Naive thymus-derived CD4-positive, alpha-beta T cell (primary cell): ENCODE measurements at regions of chr6 and their contacts with region 1.

Region 1: GRCh38 chr6:39361657-39362486 is 39.4 kb upstream of the KCNK16 start:
- DNase-seq: peak in 7 of 9 donors; percentile 20 to 49 (median 34)
- ATAC-seq: peak; percentile 80
- H3K4me3 ChIP-seq: no peak overlapping the region
- H3K4me3 Mint-ChIP-seq: peak overlapping the region in 2 of 10 donors; percentile 48 to 53
- H3K27ac ChIP-seq: no peak overlapping the region
- H3K27ac Mint-ChIP-seq: no peak overlapping the region
- H3K4me1 ChIP-seq: no peaks in the 10 kb centered on the region
- H3K4me1 Mint-ChIP-seq: peaks cover 0 to 6% (median 0%) of the 10 kb centered on the region in 7 donors
- H3K27me3 ChIP-seq: no peaks in the 10 kb centered on the region
- H3K27me3 Mint-ChIP-seq: peaks cover 0 to 19% (median 3%) of the 10 kb centered on the region in 5 donors

Region 2: DNA sequence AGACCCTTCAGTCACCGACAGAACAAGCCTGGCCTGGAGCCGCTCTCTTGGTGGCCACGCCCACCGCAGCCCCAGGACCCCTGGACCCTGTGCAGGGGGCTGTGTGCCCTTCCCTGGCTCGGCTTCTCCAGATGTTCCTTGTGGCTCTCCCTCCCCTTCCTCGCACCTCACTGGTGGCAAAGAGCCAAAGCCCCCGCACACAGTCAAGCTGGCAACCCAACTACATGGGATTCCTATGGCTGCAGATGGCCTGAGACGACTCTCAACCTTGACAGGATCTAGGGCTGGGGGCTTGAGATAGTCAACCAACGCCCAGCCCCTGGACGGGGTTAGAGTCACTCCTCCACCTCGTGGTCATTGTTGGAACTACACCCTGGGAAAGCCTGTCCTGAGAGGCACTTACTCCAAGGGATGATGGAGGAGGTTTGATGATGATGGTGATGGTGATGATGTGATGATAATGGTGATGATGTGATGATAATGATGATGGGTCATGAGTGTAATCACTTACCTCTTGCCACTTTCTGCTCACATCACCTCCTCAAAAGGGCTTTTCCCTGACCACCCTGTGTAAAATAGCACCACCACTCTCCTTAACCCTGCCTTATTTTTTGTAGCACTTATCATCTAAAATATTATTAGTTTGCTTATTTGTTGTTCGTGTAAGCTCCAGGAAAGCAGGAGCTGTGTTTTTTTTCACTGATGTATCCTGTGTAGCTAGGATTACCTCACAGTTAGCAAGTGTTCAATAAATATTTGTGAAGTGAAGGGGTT is 946.8 kb after region 1 on chr6:
- CTCF ChIA-PET with region 1: no interaction called
- POLR2A ChIA-PET with region 1: no interaction called
- intact Hi-C with region 1: loop called (anchors 5 kb)
- DNase-seq: peak in 6 of 9 donors; percentile 14 to 70 (median 40)
- ATAC-seq: peak; percentile 58
- H3K4me3 ChIP-seq: no peak overlapping the region
- H3K4me3 Mint-ChIP-seq: no peak overlapping the region
- H3K27ac ChIP-seq: no peak overlapping the region
- H3K27ac Mint-ChIP-seq: peak overlapping the region in 1 of 9 donors; percentile 58
- H3K4me1 ChIP-seq: no peaks in the 10 kb centered on the region
- H3K4me1 Mint-ChIP-seq: peaks cover 0 to 12% (median 0%) of the 10 kb centered on the region in 7 donors
- H3K27me3 ChIP-seq: no peaks in the 10 kb centered on the region
- H3K27me3 Mint-ChIP-seq: peaks cover 34 to 48% (median 44%) of the 10 kb centered on the region in 5 donors

Region 3: GRCh38 chr6:41039060-41039998 is 1677.5 kb after region 1 on chr6 and contains the start of gene UNC5CL:
- CTCF ChIA-PET with region 1: no interaction called
- POLR2A ChIA-PET with region 1: no interaction called
- intact Hi-C with region 1: loop called in 1 of 2 experiments (anchors 10 kb)
- DNase-seq: peak; percentile 11 to 57 (median 50)
- ATAC-seq: peak; percentile 77
- H3K4me3 ChIP-seq: no peak within 1 kb of the TSS
- H3K4me3 Mint-ChIP-seq: no peak within 1 kb of the TSS
- H3K27ac ChIP-seq: no peak within 1 kb of the TSS
- H3K27ac Mint-ChIP-seq: peak within 1 kb of the TSS in 2 of 9 donors; percentile 2 to 36
- H3K4me1 ChIP-seq: no peaks in the 10 kb centered on the region
- H3K4me1 Mint-ChIP-seq: peaks cover 0 to 20% (median 0%) of the 10 kb centered on the region in 7 donors
- H3K27me3 ChIP-seq: no peaks in the 10 kb centered on the region
- H3K27me3 Mint-ChIP-seq: no peaks in the 10 kb centered on the region
- total RNA-seq, gene UNC5CL: 2.2 to 7.2 (median 4.3) TPM